ENCODE measurements at regions of chr12 and their contacts with region 1.

Region 1: DNA sequence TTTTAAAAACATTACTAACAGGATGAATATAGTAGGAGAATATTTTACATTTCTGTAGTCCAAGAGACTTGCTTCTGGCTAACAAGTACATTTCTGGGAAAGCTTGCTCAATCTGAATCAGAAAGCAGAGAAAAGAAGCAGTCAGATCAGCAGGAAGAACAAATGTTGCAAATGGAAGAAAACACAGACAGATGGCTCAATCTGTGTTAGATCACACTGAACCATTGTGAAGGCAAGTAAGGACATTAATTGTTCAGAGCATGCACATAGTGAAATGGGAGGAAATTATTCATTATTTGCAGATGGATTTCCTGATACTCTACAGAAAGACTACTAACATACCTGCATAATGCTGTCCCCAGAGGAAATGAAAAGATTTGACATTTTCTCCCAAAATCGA is 65.2 kb upstream of the CNOT2 start:
- DNase-seq: peak in 1 of 10 donors; percentile 32
- H3K4me3 ChIP-seq: peak overlapping the region in 46 of 59 donors; percentile 0 to 56 (median 34)
- H3K27ac ChIP-seq: peak overlapping the region in 58 of 59 donors; percentile 27 to 94 (median 81)
- H3K27me3 ChIP-seq: no peaks in the 10 kb centered on the region
- CTCF ChIP-seq: peak in 16 of 56 donors; percentile 5 to 37 (median 14)

Region 2: GRCh38 chr12:69900720-69901131 is 277.3 kb before region 1 on chr12:
- intact Hi-C with region 1: loop called in 1 of 2 experiments (anchors 10 kb)
- DNase-seq: peak in 7 of 10 donors; percentile 57 to 88 (median 70)
- H3K4me3 ChIP-seq: peak overlapping the region in 1 of 59 donors; percentile 6
- H3K27ac ChIP-seq: peak overlapping the region in 8 of 59 donors; percentile 2 to 82 (median 55)
- H3K27me3 ChIP-seq: no peaks in the 10 kb centered on the region
- CTCF ChIP-seq: peak; percentile 79 to 95 (median 90)

Region 3: DNA sequence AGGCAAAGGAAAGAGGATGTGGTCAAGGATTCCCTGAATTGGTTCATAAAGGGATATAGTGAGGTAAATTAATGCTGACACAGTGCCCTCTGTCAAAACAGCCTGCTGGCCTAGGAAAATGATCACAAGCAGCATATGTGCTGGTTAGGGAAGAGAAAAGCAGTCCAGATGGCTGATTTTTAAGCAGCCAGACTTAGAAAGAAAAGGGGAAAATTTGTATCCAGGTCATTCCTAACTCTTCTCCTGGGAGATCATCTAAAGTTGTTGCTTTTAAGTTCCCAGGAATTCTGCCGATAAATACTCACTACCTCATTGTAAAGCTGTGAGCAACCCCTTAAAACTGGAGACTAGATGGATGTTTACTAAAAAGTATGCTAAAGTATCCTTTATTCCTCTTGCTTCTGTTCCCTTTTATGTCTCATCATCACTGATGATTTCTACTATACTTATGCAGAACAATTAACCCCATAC is 18.8 kb after region 1 on chr12:
- intact Hi-C with region 1: loop called in 1 of 2 experiments (anchors 2 kb)
- DNase-seq: peak in 1 of 10 donors; percentile 69
- H3K4me3 ChIP-seq: peak overlapping the region in 20 of 59 donors; percentile 1 to 43 (median 12)
- H3K27ac ChIP-seq: peak overlapping the region in 49 of 59 donors; percentile 4 to 80 (median 60)
- H3K27me3 ChIP-seq: no peaks in the 10 kb centered on the region
- CTCF ChIP-seq: peak in 7 of 56 donors; percentile 0 to 26 (median 13)

Region 4: DNA sequence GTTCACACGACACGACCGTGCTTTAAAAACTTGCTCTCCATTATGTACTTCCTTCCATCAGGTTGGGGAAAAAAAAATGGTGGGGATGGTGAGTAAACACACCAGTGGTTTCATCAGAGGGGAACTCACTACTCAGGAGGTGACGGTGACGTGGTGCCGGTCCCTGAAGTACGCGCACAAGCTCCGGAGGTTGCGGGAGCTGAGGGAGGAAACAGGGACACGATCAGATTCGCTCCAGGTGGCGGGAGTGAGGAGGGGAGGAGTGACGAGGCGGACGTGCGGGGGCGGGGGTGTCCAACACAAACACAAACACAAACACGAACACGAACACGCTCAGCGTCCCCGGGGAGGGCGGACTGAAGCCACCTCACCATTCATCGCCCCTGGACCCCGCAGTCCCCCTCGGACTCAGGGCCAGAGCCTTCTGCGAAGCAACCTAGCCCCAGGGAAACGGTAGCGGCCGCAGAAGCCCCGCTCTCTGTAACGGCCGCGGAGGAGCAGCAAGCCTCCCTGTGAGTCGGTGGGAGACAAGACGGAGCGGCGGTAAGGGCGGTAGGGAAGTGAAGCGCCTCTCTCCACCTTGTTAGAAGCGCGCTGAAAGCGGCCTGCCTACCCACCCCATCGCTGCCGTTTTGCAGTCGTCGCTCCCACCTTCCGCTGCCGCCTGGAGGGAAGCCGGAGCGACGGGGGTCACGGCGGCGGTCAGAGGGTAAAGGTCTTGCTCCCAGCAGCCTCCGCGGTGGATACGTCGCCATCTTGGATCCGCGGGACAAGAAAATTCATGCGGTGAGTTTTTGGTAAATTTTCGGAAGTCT is 64.9 kb after region 1 on chr12 and contains the start of gene CNOT2:
- intact Hi-C with region 1: loop called in 1 of 2 experiments (anchors 5 kb)
- DNase-seq: peak; percentile 79 to 90 (median 85)
- H3K4me3 ChIP-seq: peak within 1 kb of the TSS; percentile 70 to 99 (median 93)
- H3K27ac ChIP-seq: peak within 1 kb of the TSS; percentile 82 to 99 (median 95)
- H3K27me3 ChIP-seq: no peaks in the 10 kb centered on the region
- CTCF ChIP-seq: peak in 19 of 56 donors; percentile 2 to 29 (median 12)
- total RNA-seq, gene CNOT2: 63.7 to 156 (median 84.5) TPM

Region 5: GRCh38 chr12:70379846-70380245 is 201.8 kb after region 1 on chr12:
- intact Hi-C with region 1: loop called in 1 of 2 experiments (anchors 10 kb)
- DNase-seq: no peak
- H3K4me3 ChIP-seq: no peak overlapping the region
- H3K27ac ChIP-seq: no peak overlapping the region
- H3K27me3 ChIP-seq: no peaks in the 10 kb centered on the region
- CTCF ChIP-seq: no peak

Measured in dorsolateral prefrontal cortex (tissue), 120 donors.